Right lobe of liver (tissue), 6 donors: ENCODE measurements at regions of chr7 and their contacts with region 1.

Region 1: DNA sequence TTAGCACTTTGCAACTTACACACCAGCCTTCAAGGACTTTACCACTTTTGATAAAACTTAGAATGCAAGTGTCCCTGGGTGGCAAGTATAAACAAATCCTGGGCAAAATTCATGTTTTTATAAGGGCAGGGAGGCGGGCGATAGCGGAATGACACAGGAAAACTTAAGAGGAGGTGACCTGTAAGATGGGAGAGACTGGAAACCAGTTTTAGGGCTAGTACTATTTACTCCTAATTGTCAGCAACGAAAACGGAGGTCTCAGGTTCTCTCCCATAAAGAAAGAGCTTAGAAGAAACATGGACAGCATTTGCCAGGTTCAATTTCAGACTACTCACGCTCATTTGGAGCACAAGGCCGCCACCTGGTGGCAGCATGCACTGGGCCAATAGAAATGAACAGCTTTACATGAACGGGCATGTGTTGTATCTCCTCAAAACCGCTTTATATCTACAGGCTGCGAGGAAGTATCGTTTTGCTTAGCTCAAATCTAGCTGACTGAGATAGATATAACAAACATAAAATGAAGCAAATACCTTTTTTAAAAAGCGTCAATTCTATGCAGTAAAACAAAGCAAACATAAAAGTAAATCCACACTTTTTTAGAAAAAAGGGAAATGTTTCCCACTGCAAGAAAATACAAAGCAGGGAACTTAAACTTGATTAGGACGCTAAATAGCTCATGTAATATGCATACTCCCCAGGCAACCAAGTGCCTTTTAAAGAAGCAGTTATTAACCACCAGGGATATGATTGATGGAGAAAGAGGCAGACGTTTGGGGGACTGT is 37.6 kb upstream of the SVOPL start:
- DNase-seq: peak; percentile 81 to 88 (median 83)
- ATAC-seq: peak; percentile 99 to 100 (median 99)
- H3K4me3 ChIP-seq: peak overlapping the region in 2 of 3 donors; percentile 28 to 43
- H3K27ac ChIP-seq: peak overlapping the region in 1 of 3 donors; percentile 18
- H3K4me1 ChIP-seq: peaks cover 0 to 3% (median 0%) of the 10 kb centered on the region in 4 donors
- H3K27me3 ChIP-seq: no peaks in the 10 kb centered on the region
- CTCF ChIP-seq: peak; percentile 93 to 97 (median 95)
- POLR2A ChIP-seq: no peak

Region 2: GRCh38 chr7:138238734-138239659 is 499.7 kb before region 1 on chr7:
- intact Hi-C with region 1: loop called in 1 of 2 experiments (anchors 10 kb)
- DNase-seq: no peak
- ATAC-seq: peak in 2 of 4 donors; percentile 25 to 38
- H3K4me3 ChIP-seq: no peak overlapping the region
- H3K27ac ChIP-seq: peak overlapping the region in 2 of 3 donors; percentile 32 to 54
- H3K4me1 ChIP-seq: peaks cover 0 to 44% (median 5%) of the 10 kb centered on the region in 4 donors
- H3K27me3 ChIP-seq: no peaks in the 10 kb centered on the region
- CTCF ChIP-seq: no peak
- POLR2A ChIP-seq: no peak

Region 3: DNA sequence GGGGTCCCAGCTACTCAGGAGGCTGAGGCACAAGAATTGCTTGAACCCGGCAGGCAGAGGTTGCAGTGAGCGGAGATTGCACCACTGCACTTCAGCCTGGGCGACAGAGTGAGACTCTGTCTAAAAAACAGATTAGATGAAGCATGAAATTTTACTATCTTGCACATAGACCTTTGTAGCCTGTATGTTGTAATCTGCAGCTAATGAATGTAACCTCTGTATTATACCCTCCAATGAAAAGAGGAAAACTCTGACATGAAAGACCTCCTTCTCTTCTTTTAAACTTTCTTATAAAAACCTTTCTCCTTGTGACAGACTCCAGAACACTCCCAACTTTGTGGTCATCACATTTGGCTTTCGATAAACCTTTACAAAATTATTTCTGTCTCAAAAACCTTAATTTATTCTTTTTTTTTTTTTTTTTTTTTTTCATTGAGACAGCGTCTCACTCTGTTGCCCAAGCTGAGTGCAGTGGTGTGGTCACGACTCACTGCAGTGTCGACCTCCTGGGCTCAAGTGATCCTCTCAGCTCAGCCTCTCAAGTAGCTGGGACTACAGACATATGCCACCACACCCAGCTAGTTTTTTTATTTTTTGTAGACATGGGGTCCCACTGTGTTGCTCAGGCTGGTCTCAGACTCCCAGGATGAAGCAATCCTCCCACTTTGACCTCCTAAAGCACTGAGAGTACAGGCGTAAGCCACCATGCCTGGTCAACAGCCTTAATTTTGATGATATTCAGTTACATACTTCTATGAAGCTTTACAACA is 135.0 kb before region 1 on chr7:
- intact Hi-C with region 1: no loop called
- DNase-seq: peak in 1 of 3 donors; percentile 52
- ATAC-seq: peak; percentile 90 to 92 (median 92)
- H3K4me3 ChIP-seq: no peak overlapping the region
- H3K27ac ChIP-seq: no peak overlapping the region
- H3K4me1 ChIP-seq: peaks cover 0 to 6% (median 0%) of the 10 kb centered on the region in 4 donors
- H3K27me3 ChIP-seq: no peaks in the 10 kb centered on the region
- CTCF ChIP-seq: no peak
- POLR2A ChIP-seq: no peak

Region 4: DNA sequence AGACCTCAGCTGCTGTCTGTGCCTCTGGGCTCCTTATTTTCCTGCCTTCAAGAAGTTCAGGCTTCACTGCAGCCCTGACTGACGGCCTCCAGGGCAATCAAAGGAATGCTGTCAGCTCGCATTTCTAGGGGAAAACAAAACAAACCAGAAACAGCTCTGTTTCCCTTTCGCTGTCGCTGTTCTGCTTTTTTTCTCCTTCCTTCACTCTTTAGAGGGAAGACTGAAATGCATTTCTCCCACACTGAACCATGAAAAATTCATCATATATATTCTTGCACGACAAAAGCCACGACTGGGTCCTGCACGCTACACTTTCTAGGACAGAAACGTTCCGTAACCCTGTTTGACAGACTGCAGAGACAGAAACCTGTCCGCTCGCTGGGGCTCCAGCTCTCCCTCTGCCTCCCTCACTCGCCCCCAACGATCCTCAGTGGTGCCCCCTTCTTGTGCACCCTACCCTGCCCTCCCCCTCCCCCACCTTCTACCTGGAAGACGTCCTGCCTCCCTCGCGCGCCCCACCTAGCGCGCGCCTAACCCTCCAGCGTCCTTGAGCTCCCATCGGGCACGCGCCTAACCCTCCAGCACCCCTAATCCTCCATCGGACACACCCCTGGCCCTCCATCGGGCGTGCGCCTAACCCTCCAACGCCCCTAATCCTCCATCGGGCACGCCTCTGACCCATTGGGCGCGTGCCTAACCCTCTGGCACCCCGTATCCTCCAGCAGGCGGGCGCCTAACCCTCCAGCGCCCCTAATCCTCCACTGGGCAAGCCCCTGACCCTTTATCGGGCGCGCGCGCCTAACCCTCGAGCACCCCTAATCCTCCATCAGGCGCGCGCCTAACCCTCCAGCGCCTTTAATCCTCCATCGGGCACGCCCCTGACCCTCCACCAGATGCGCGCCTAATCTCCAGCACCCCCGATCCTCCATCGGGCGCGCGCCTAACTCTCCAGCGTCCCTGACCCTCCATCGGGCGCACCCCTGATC is 74.7 kb before region 1 on chr7:
- intact Hi-C with region 1: no loop called
- DNase-seq: no peak
- ATAC-seq: peak in 2 of 4 donors; percentile 42
- H3K4me3 ChIP-seq: peak overlapping the region; percentile 5 to 26 (median 25)
- H3K27ac ChIP-seq: no peak overlapping the region
- H3K4me1 ChIP-seq: no peaks in the 10 kb centered on the region
- H3K27me3 ChIP-seq: no peaks in the 10 kb centered on the region
- CTCF ChIP-seq: no peak
- POLR2A ChIP-seq: no peak

Region 5: DNA sequence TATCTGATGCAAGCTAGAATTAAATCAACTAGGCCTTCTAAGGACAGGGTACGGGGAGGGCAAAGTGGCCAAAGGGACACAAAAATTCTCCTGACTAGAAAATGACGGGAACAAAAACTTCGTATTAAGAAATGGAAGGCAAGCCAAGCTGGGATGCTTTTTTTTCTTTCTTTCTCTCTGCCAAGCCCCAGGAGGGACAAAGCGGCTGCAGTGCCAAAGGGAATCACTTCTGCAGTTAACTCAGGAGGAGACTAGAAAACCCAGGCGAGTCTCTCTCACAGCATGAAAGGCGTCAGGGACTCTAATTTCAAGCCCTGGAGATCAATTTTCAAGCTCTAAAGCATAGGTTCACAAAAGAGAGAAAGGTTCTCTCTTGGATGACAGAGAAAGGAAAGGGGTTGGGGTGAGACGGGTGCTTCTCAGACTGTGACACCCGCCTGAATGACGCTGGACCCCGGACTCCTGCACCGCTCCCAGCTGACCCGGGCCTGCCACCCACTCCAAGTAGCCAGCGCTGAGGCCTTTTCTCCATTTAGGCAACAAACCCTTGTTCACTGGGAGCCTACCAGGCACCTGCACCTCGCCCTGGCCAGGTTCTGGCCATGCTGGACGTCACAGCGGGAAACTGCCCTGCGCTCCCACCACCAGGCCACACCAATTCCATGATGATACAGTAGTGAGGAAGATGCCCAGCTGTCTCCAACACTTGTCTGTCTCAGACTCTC is 185.9 kb after region 1 on chr7:
- intact Hi-C with region 1: no loop called
- DNase-seq: no peak
- ATAC-seq: no peak
- H3K4me3 ChIP-seq: no peak overlapping the region
- H3K27ac ChIP-seq: no peak overlapping the region
- H3K4me1 ChIP-seq: no peaks in the 10 kb centered on the region
- H3K27me3 ChIP-seq: no peaks in the 10 kb centered on the region
- CTCF ChIP-seq: no peak
- POLR2A ChIP-seq: no peak